ENCODE measurements at regions of chr6 and their contacts with region 1.

Region 1: DNA sequence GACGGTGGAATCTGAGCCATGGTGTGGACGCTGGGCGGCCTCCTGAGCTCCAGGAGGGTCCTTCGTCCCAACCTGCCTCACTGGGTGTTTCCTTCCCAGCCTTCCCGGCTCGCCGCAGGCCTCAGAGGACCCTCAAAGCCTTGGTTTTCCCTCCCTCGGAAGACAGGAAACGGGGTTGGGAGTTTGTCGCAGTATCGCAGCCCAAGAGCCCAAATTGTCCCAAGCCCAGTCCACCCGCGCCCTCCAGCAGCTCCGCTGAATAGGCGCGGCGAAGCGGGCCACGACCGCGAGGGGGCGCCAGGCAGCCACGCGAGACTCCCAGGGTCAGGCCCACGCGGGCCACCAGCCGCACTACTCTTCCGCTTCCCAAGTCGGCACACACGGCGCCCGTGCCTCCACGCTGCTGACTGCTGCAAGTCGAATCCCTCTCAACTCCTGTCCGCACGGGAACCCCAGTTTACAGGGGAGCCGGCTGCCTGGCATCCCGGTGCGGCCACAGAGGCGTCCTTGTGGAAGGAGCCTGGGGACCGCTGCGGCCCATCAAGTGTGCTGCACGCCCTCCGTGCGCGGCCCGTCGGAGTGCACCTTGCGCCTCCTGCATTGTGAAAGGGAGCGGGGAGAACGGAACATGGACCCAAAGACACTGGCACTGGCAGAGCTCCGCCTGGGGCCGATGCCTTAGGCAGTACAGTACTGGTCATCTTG is 40.4 kb upstream of the HMGA1 start:
- DNase-seq: peak; percentile 94
- H3K4me3 ChIP-seq: peak overlapping the region; percentile 40 to 50
- H3K27ac ChIP-seq: no peak overlapping the region
- H3K4me1 ChIP-seq: peaks cover 0 to 8% of the 10 kb centered on the region in 2 experiments; a peak in 1 of 4 replicates
- H3K27me3 ChIP-seq: no peaks in the 10 kb centered on the region
- CTCF ChIP-seq: peak; percentile 89
- EP300 ChIP-seq: no peak
- RAD21 ChIP-seq: peak; percentile 85

Region 2: DNA sequence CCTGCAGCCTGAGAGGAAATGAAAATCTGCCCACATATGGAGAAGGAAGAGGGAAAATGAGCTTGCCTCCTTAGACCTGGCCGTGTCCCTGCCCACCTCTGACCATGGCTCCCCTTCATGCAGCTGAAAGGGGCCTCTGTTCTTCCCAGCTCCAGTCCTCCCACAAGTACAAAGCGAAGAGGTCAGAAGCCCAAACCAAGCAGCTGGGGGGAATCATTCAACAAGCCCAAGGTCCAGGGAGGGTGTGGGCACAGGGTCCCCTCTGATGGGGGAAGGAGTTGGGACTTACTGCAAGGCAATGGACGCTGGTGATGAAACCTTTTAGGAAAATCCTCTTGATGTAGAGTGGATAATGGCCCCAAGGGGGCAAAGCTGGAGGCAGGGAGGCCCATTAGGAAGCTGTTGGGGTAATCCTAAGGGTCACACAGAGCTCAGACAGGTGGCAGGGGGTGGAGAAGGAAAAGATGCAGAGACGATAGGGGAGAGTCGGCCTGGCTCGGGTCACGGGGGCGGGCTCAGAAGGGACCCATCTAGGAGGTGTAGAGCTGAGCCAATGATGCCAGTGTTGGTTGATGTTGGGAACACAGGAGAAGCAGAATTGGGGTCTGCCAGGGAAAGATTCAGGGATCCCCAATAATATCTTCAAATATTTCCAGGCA is 34.3 kb before region 1 on chr6:
- CTCF ChIA-PET with region 1: interaction called, 11 read pairs
- POLR2A ChIA-PET with region 1: no interaction called
- DNase-seq: peak; percentile 4
- H3K4me3 ChIP-seq: no peak overlapping the region
- H3K27ac ChIP-seq: no peak overlapping the region
- H3K4me1 ChIP-seq: no peaks in the 10 kb centered on the region
- H3K27me3 ChIP-seq: no peaks in the 10 kb centered on the region
- CTCF ChIP-seq: no peak
- EP300 ChIP-seq: no peak
- RAD21 ChIP-seq: no peak

Region 3: DNA sequence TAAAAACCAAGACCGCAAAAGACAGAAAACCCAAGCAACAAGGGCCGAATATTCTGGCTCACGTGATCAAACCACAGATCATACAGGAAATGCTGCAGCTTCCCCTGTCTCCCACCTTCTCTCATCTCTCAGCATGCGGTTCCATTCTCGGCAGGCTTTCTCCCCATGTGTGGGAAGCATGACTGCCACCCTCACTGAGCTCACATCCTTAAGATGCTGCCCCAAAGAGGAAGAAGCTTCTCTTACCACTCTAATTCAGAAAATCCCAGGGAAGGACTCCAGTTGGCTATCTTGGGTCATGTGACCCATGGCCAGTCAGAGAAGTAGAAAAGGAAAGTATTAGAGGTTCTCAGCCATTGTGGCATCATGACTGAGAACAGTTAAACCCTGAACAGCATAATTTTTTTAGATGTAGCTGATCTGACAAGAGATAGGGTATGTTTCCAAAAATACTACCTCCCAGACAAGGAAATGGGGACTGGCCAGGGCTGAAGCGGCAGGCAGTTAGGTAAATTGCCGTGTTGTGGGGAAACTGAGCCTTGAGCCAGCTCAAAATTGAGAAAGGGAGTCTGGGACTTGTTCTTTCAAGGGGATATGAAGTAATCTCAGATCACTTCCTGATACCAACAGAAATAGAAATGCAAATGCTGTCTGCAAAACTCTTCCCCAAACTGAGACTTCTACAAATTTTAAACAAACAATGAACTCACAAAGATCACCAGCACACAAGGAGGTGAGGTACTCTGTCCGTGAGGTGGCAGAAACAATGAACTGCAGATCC is 13.3 kb before region 1 on chr6:
- CTCF ChIA-PET with region 1: interaction called, 15 read pairs
- POLR2A ChIA-PET with region 1: no interaction called
- DNase-seq: no peak
- H3K4me3 ChIP-seq: no peak overlapping the region
- H3K27ac ChIP-seq: no peak overlapping the region
- H3K4me1 ChIP-seq: no peaks in the 10 kb centered on the region
- H3K27me3 ChIP-seq: no peaks in the 10 kb centered on the region
- CTCF ChIP-seq: no peak
- EP300 ChIP-seq: no peak
- RAD21 ChIP-seq: no peak

Region 4: GRCh38 chr6:34230672-34231371 is 34.5 kb after region 1 on chr6:
- CTCF ChIA-PET with region 1: interaction called, 12 read pairs
- POLR2A ChIA-PET with region 1: no interaction called
- DNase-seq: no peak
- H3K4me3 ChIP-seq: no peak overlapping the region
- H3K27ac ChIP-seq: no peak overlapping the region
- H3K4me1 ChIP-seq: peaks cover 0 to under 1% of the 10 kb centered on the region in 2 experiments; a peak in 1 of 4 replicates
- H3K27me3 ChIP-seq: no peaks in the 10 kb centered on the region
- CTCF ChIP-seq: no peak
- EP300 ChIP-seq: no peak
- RAD21 ChIP-seq: no peak

Region 5: DNA sequence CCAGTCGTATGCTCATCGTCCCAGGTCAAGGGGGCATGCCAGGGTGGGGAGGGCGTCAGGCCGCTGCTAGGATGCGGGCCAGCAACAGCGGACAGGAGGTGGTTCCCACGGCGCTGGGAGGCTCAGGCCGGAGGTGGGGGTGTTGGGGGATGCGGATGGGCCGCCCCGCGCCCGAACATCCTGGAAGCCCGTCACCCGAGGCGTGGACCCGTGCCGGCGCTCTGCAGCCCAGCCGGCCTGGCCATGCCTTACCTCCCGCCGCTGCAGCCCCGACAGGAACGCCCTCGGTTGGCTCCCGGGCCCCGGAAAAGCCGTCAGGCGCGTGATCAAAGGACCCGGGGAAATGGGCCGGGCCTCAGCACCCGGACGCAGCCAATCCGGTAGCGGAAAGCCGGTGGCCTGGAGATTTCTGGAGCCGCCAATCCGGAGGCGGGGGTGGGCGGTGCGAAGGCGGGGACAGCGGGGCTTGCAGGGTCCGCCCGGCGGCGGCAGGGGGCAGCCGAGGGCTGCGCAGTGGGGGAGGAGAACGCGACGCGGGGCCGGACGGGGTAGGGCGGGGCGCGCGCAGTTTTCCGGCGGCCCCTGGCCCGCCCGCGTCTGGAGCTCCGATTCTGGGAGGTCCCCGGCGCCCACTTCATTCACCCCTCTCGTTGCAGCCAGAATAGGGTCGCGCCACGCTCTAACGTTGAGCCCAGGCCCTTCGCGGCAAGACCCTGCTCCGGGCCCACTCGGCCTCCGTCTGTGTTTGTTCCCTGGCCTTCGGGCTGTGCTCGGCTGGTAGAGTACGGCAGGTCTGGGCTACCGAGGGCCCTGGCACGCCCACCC is 52.7 kb after region 1 on chr6 and contains the start of gene SMIM29:
- CTCF ChIA-PET with region 1: interaction called, 52 read pairs
- POLR2A ChIA-PET with region 1: interaction called, 6 read pairs
- DNase-seq: peak; percentile 98
- H3K4me3 ChIP-seq: peak within 1 kb of the TSS; percentile 72 to 89
- H3K27ac ChIP-seq: peak within 1 kb of the TSS; percentile 78 to 97
- H3K4me1 ChIP-seq: peaks cover 21 to 22% of the 10 kb centered on the region in 2 experiments; a peak in 3 of 4 replicates
- H3K27me3 ChIP-seq: no peaks in the 10 kb centered on the region
- CTCF ChIP-seq: peak; percentile 77
- EP300 ChIP-seq: no peak
- RAD21 ChIP-seq: peak; percentile 79
- polyA plus RNA-seq, gene SMIM29: 50.2 and 52.2 TPM in 2 replicates

Region 6: GRCh38 chr6:34425498-34426410 is 229.5 kb after region 1 on chr6 and contains the start of gene RPS10:
- CTCF ChIA-PET with region 1: interaction called, 15 read pairs
- POLR2A ChIA-PET with region 1: no interaction called
- DNase-seq: peak; percentile 99
- H3K4me3 ChIP-seq: peak within 1 kb of the TSS; percentile 74 to 94
- H3K27ac ChIP-seq: peak within 1 kb of the TSS; percentile 66 to 84
- H3K4me1 ChIP-seq: peaks cover 7 to 20% of the 10 kb centered on the region in 2 experiments; a peak in 3 of 4 replicates
- H3K27me3 ChIP-seq: no peaks in the 10 kb centered on the region
- CTCF ChIP-seq: no peak
- EP300 ChIP-seq: no peak
- RAD21 ChIP-seq: no peak
- polyA plus RNA-seq, gene RPS10: 4,475 and 5,166 TPM in 2 replicates

Measured in SK-N-SH (cell line).